ENCODE measurements at regions of chrX and their contacts with region 1.

Region 1: GRCh38 chrX:26470941-26471340 is 255.0 kb downstream of the MAGEB5 start:
- DNase-seq: no peak
- H3K4me3 ChIP-seq: no peak overlapping the region
- H3K4me3 Mint-ChIP-seq: no peak overlapping the region
- H3K27ac Mint-ChIP-seq: no peak overlapping the region
- H3K4me1 ChIP-seq: peaks cover 24% of the 10 kb centered on the region
- H3K4me1 Mint-ChIP-seq: no peaks in the 10 kb centered on the region
- H3K27me3 ChIP-seq: no peaks in the 10 kb centered on the region
- H3K27me3 Mint-ChIP-seq: no peaks in the 10 kb centered on the region
- CTCF ChIP-seq: no peak

Region 2: GRCh38 chrX:26138274-26138673 is 332.7 kb before region 1 on chrX and contains the start of gene MAGEB18:
- CTCF ChIA-PET with region 1: no interaction called
- POLR2A ChIA-PET with region 1: no interaction called
- intact Hi-C with region 1: no loop called
- DNase-seq: no peak
- H3K4me3 ChIP-seq: no peak within 1 kb of the TSS
- H3K4me3 Mint-ChIP-seq: no peak within 1 kb of the TSS
- H3K27ac Mint-ChIP-seq: no peak within 1 kb of the TSS
- H3K4me1 ChIP-seq: no peaks in the 10 kb centered on the region
- H3K4me1 Mint-ChIP-seq: no peaks in the 10 kb centered on the region
- H3K27me3 ChIP-seq: no peaks in the 10 kb centered on the region
- H3K27me3 Mint-ChIP-seq: no peaks in the 10 kb centered on the region
- CTCF ChIP-seq: no peak
- total RNA-seq, gene MAGEB18: not detected in 2 replicates

Region 3: DNA sequence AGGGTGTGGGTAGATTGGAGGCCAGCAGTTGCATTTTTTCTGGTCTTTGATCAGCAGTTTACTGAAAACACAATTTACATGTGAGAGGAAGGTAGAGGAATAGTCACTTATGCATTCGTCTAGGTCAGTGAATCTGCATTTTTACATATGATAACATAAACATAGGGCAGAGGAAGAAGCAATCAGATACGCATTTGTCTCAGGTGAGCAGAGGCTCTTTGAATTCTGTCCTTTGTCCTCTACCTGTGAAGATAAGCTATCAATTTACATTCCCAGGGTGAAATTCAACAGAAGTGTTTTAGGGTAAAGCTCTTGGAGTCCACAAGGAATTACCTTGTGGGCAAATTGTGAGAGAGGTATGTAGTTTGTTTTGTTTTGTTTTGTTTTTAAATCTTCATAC is 51.6 kb after region 1 on chrX:
- CTCF ChIA-PET with region 1: no interaction called
- POLR2A ChIA-PET with region 1: no interaction called
- intact Hi-C with region 1: loop called (anchors 10 kb)
- DNase-seq: no peak
- H3K4me3 ChIP-seq: no peak overlapping the region
- H3K4me3 Mint-ChIP-seq: no peak overlapping the region
- H3K27ac Mint-ChIP-seq: peak overlapping the region; percentile 53
- H3K4me1 ChIP-seq: peaks cover 21% of the 10 kb centered on the region
- H3K4me1 Mint-ChIP-seq: peaks cover 11% of the 10 kb centered on the region
- H3K27me3 ChIP-seq: no peaks in the 10 kb centered on the region
- H3K27me3 Mint-ChIP-seq: no peaks in the 10 kb centered on the region
- CTCF ChIP-seq: no peak